ENCODE measurements at regions of chr11 and their contacts with region 1.

Region 1: GRCh38 chr11:10673501-10674062 is 20.0 kb downstream of the IRAG1 start:
- DNase-seq: no peak
- ATAC-seq: peak; percentile 31
- H3K4me3 ChIP-seq: no peak overlapping the region
- H3K4me3 Mint-ChIP-seq: peak overlapping the region in 2 of 10 donors; percentile 2 to 6
- H3K27ac ChIP-seq: no peak overlapping the region
- H3K27ac Mint-ChIP-seq: no peak overlapping the region
- H3K4me1 ChIP-seq: no peaks in the 10 kb centered on the region
- H3K4me1 Mint-ChIP-seq: peaks cover 0 to 16% (median 11%) of the 10 kb centered on the region in 7 donors
- H3K27me3 ChIP-seq: no peaks in the 10 kb centered on the region
- H3K27me3 Mint-ChIP-seq: peaks cover 39 to 68% (median 49%) of the 10 kb centered on the region in 5 donors

Region 2: GRCh38 chr11:10293423-10294289 is 379.9 kb before region 1 on chr11 and contains the start of gene SBF2:
- CTCF ChIA-PET with region 1: no interaction called
- POLR2A ChIA-PET with region 1: no interaction called
- intact Hi-C with region 1: no loop called
- DNase-seq: peak; percentile 62 to 83 (median 77)
- ATAC-seq: peak; percentile 71
- H3K4me3 ChIP-seq: peak within 1 kb of the TSS; percentile 73
- H3K4me3 Mint-ChIP-seq: peak within 1 kb of the TSS; percentile 82 to 92 (median 88)
- H3K27ac ChIP-seq: peak within 1 kb of the TSS; percentile 48
- H3K27ac Mint-ChIP-seq: peak within 1 kb of the TSS in 8 of 9 donors; percentile 10 to 83 (median 59)
- H3K4me1 ChIP-seq: peaks cover 16 to 29% of the 10 kb centered on the region in 2 donors
- H3K4me1 Mint-ChIP-seq: peaks cover 28 to 44% (median 37%) of the 10 kb centered on the region in 7 donors
- H3K27me3 ChIP-seq: peaks cover 0 to 2% of the 10 kb centered on the region in 2 donors
- H3K27me3 Mint-ChIP-seq: peaks cover 15 to 55% (median 26%) of the 10 kb centered on the region in 5 donors
- total RNA-seq, gene SBF2: 8.5 to 35.2 (median 16.1) TPM

Region 3: GRCh38 chr11:10688401-10688800 is 14.8 kb after region 1 on chr11:
- CTCF ChIA-PET with region 1: interaction called, 10 read pairs
- POLR2A ChIA-PET with region 1: no interaction called
- intact Hi-C with region 1: no loop called
- DNase-seq: no peak
- ATAC-seq: no peak
- H3K4me3 ChIP-seq: no peak overlapping the region
- H3K4me3 Mint-ChIP-seq: no peak overlapping the region
- H3K27ac ChIP-seq: no peak overlapping the region
- H3K27ac Mint-ChIP-seq: no peak overlapping the region
- H3K4me1 ChIP-seq: no peaks in the 10 kb centered on the region
- H3K4me1 Mint-ChIP-seq: no peaks in the 10 kb centered on the region
- H3K27me3 ChIP-seq: no peaks in the 10 kb centered on the region
- H3K27me3 Mint-ChIP-seq: peaks cover 0 to 36% (median 6%) of the 10 kb centered on the region in 5 donors

Region 4: GRCh38 chr11:10709299-10710086 is 35.9 kb after region 1 on chr11:
- CTCF ChIA-PET with region 1: no interaction called
- POLR2A ChIA-PET with region 1: no interaction called
- intact Hi-C with region 1: no loop called
- DNase-seq: no peak
- ATAC-seq: no peak
- H3K4me3 ChIP-seq: no peak overlapping the region
- H3K4me3 Mint-ChIP-seq: no peak overlapping the region
- H3K27ac ChIP-seq: no peak overlapping the region
- H3K27ac Mint-ChIP-seq: no peak overlapping the region
- H3K4me1 ChIP-seq: no peaks in the 10 kb centered on the region
- H3K4me1 Mint-ChIP-seq: no peaks in the 10 kb centered on the region
- H3K27me3 ChIP-seq: no peaks in the 10 kb centered on the region
- H3K27me3 Mint-ChIP-seq: peaks cover 0 to 8% (median 0%) of the 10 kb centered on the region in 5 donors